Activated B cell treated with CpG ODN at 0.5 μM for 24 hours (primary cell): ENCODE measurements at regions of chr1 and their contacts with region 1.

Region 1: DNA sequence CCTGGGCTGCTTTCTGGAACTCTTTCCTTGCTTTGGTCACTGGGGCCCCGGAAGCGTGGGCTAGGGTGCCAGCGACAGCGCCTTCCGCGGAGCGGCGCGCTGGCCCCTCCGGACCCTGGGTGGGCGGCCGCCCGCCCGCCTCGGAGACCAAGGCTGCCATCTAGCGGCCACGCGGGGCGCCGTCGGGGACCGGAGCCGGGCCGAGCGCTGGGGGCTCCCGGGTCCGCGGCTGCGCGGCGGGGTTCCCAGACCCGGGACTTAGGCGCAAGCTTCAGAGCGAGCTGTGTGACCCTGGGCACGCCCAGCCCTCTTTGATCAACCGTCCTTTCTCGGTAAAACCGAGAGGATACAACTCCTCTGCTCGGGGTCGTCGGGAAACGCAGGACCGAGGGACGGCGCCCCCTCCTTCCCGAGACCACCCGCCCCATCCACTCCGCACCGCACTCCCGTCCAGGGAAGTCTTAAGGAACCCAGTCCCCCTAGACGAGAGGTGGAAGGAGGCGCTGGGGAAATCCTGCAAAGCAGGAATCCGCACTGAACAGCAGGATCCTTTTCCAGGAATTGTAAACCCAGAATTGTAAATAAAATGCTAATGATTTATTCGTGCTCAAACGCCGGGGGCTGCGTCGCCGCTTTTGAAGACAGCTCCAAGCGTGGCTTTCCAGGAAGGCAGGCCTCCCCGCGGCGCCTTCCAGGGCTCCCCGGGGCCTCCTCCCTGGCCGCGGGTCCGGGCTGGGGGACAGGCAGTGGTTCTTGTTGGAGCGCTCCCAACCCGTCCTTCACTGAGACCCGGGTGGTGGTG is 41.2 kb downstream of the RRAGC start:
- DNase-seq: peak; percentile 64
- ATAC-seq: peak; percentile 72
- H3K4me3 Mint-ChIP-seq: no peak overlapping the region
- H3K27ac Mint-ChIP-seq: no peak overlapping the region
- H3K4me1 Mint-ChIP-seq: peaks cover 21% of the 10 kb centered on the region
- H3K27me3 Mint-ChIP-seq: peaks cover 67% of the 10 kb centered on the region
- CTCF ChIP-seq: no peak

Region 2: DNA sequence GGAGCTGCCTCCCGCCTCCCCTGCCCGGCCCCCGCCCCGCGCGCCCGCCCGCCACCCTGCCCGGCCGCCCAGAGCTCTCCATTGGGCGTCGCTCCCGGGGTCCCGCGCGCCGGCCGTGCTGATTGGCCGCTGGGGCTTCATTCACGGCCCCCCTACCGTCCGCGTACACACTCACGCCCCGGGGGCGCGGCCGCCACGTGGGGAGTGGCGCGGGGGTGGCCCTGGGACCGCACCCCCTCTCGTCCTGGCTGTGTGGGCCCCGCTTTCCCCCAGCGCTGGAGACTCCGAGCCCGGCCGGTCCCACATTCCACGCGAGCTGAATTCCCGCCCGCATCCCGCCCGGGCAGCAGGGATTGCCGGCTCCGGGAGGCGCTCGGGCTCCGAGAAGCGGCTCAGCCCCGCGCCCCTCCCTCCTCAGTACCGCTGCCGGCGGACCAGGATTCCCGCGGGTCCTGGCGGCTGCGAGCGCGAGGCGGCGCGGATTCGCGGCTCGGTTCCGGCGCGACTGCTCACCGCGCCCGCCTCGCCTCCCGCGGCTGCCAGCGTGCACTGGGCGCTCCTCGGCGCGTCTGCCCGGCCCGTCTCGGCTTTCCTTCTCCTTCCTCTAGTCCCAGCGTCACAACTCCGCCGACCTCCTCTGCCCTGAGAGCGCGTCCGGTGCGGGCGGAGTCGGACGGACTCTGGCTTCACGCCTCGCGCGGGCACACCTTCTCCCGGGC is 771.3 kb before region 1 on chr1:
- CTCF ChIA-PET with region 1: no interaction called
- POLR2A ChIA-PET with region 1: no interaction called
- intact Hi-C with region 1: loop called (anchors 5 kb)
- DNase-seq: peak; percentile 78
- ATAC-seq: peak; percentile 86
- H3K4me3 Mint-ChIP-seq: peak overlapping the region; percentile 83
- H3K27ac Mint-ChIP-seq: peak overlapping the region; percentile 18
- H3K4me1 Mint-ChIP-seq: peaks cover 29% of the 10 kb centered on the region
- H3K27me3 Mint-ChIP-seq: peaks cover 21% of the 10 kb centered on the region
- CTCF ChIP-seq: no peak

Region 3: DNA sequence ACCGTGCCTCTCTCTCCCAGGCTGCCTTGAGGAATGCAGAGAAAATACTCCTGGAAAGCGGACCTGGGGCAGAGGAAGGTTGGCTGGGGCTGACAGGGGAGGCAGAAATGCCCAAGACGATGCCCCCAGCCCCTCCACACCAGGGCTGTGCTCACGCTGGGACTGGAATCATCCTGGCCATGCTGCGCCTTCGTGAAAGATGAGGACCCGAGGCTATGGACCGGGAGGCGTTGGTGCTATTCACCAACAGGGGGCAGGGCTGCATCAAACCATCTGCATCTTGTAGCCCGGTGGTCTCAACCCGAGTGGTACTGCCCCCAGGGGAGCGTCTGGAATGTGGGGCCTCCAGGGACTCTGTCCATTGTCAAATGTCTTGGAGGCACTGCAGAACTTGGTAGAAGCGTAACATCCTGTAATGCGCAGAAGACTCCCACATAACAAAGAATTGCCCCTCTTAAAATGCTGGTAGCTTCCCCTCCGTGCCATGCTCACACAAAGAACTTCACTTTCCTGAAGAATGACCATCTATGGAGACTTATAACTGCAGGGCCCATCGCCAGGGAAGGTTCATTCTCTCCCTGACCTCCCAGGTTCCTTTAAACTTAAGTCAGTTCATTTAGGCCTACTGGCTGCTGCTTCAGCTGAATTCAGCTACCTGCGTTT is 210.0 kb before region 1 on chr1:
- CTCF ChIA-PET with region 1: no interaction called
- POLR2A ChIA-PET with region 1: no interaction called
- intact Hi-C with region 1: loop called (anchors 5 kb)
- DNase-seq: no peak
- ATAC-seq: peak; percentile 37
- H3K4me3 Mint-ChIP-seq: no peak overlapping the region
- H3K27ac Mint-ChIP-seq: no peak overlapping the region
- H3K4me1 Mint-ChIP-seq: no peaks in the 10 kb centered on the region
- H3K27me3 Mint-ChIP-seq: peaks cover 24% of the 10 kb centered on the region
- CTCF ChIP-seq: no peak

Region 4: DNA sequence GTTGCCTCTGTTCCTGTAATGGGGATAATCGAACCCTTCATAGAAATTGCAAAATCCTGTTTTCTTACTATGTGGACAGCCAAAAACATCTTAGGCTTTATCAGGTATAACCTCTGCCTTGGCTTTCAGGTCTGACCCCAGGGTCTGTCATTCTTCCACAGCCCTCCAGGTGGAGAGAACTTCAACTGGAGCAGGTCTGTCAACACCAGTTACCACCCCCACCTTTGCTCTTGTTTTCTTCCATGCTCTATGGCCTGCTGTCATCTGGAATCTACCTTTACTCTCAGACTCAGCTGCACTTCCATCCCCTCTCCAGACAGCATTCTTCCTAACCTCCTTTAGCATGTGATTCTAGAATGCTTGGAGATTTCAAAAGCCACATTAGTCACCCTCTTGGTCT is 73.4 kb after region 1 on chr1:
- CTCF ChIA-PET with region 1: no interaction called
- POLR2A ChIA-PET with region 1: no interaction called
- intact Hi-C with region 1: no loop called
- DNase-seq: no peak
- ATAC-seq: no peak
- H3K4me3 Mint-ChIP-seq: no peak overlapping the region
- H3K27ac Mint-ChIP-seq: no peak overlapping the region
- H3K4me1 Mint-ChIP-seq: no peaks in the 10 kb centered on the region
- H3K27me3 Mint-ChIP-seq: no peaks in the 10 kb centered on the region
- CTCF ChIP-seq: no peak

Region 5: DNA sequence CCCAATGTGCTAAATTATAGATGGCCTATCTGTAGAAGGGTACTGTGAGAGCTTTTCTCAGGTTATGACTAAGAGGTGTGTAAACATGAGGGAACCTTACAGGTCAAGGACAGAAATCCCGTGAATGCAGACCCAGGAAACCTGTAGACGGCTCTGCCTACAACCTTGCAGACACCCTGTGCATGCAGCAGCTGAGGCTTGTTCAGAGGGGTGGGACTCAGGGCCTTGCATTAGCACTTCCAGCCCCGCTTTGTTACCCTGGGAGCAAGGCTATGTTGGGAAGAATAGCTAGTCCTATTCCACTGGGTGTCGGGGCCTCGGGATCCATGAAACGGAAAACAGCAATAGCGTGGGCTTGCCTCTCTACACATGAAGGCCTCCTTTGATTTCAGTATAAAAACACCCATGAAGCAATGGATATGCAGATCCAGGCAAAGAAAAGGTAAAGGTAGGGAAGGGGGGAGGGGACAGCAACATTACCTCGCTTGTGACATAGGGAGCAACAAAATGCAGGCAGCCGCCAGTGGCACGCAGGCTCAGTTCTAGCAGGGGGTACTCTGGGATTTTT is 198.3 kb after region 1 on chr1:
- CTCF ChIA-PET with region 1: no interaction called
- POLR2A ChIA-PET with region 1: no interaction called
- intact Hi-C with region 1: no loop called
- DNase-seq: no peak
- ATAC-seq: no peak
- H3K4me3 Mint-ChIP-seq: no peak overlapping the region
- H3K27ac Mint-ChIP-seq: no peak overlapping the region
- H3K4me1 Mint-ChIP-seq: no peaks in the 10 kb centered on the region
- H3K27me3 Mint-ChIP-seq: no peaks in the 10 kb centered on the region
- CTCF ChIP-seq: no peak